ENCODE measurements at regions of chr4 and their contacts with region 1.

Region 1: GRCh38 chr4:39889226-39889625 is 88.5 kb downstream of the PDS5A start:
- DNase-seq: no peak
- ATAC-seq: no peak
- H3K4me3 ChIP-seq: no peak overlapping the region
- H3K4me3 Mint-ChIP-seq: no peak overlapping the region
- H3K27ac ChIP-seq: no peak overlapping the region
- H3K27ac Mint-ChIP-seq: no peak overlapping the region
- H3K4me1 ChIP-seq: no peaks in the 10 kb centered on the region
- H3K4me1 Mint-ChIP-seq: peaks cover 0 to 12% (median 0%) of the 10 kb centered on the region in 7 donors
- H3K27me3 ChIP-seq: no peaks in the 10 kb centered on the region
- H3K27me3 Mint-ChIP-seq: no peaks in the 10 kb centered on the region

Region 2: DNA sequence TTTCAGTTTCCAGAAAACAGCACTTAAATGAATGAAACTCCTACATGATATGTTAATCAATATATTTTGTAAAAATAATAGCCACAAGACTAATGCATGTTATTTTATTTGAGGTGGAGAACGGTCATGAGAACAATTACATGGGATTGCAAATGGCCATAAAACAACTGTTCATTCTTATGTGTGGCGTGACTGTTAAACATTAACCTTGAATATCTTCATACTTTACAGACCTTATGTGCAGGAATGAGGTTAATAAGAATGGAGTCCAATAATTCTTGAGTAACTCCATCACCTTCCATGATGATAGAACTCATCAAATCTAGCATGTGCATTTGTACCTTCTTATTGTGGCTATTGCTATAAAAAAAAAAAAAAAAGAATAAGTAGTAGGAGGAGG is 33.2 kb after region 1 on chr4:
- CTCF ChIA-PET with region 1: no interaction called
- POLR2A ChIA-PET with region 1: no interaction called
- intact Hi-C with region 1: loop called in 1 of 2 experiments (anchors 5 kb)
- DNase-seq: no peak
- ATAC-seq: no peak
- H3K4me3 ChIP-seq: no peak overlapping the region
- H3K4me3 Mint-ChIP-seq: no peak overlapping the region
- H3K27ac ChIP-seq: no peak overlapping the region
- H3K27ac Mint-ChIP-seq: no peak overlapping the region
- H3K4me1 ChIP-seq: no peaks in the 10 kb centered on the region
- H3K4me1 Mint-ChIP-seq: peaks cover 0 to 19% (median 13%) of the 10 kb centered on the region in 7 donors
- H3K27me3 ChIP-seq: no peaks in the 10 kb centered on the region
- H3K27me3 Mint-ChIP-seq: no peaks in the 10 kb centered on the region

Measured in naive thymus-derived CD4-positive, alpha-beta T cell (primary cell).